GM10248 (cell line): ENCODE measurements at regions of chr1 and their contacts with region 1.

Region 1: GRCh38 chr1:227776331-227776771 is 39.1 kb upstream of the PRSS38 start:
- DNase-seq: no peak
- CTCF ChIP-seq: no peak

Region 2: GRCh38 chr1:227586733-227587132 is 189.6 kb before region 1 on chr1:
- CTCF ChIA-PET with region 1: no interaction called
- POLR2A ChIA-PET with region 1: no interaction called
- DNase-seq: no peak
- CTCF ChIP-seq: no peak

Region 3: DNA sequence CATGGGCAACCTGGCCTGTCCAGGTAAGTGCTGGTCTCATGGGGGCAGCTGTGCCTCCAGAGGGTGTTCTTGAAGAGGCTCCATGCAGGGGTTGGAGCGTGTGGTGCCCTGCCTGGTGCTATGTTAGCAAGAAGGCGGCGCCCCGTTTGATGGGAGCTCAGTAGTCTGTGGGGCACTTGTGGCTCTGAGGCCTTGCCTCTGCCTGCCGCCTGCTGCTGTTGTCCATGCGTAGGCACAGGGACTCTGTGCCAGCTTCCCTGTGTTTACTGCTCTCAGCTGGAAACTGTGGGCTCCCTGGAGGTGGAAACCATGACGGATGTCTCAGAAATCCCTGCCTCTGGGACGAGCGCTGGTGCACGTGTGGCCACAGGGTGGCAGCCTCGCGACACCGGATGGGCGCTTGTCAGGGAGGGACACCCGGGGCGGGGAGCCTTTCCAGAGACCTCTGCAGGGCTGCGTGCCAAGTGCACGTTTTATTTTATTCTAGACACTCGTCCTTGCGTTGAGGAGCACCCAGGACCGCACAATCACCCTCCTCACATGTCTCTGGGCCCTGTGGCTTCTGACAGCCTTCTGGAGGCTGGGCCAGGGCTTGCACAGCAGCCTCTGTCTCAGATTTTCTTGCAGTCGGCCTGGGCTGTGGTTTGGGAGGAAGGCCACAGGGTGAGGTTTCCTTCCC is 14.0 kb before region 1 on chr1:
- CTCF ChIA-PET with region 1: interaction called, 27 read pairs
- POLR2A ChIA-PET with region 1: no interaction called
- DNase-seq: peak; percentile 91
- CTCF ChIP-seq: peak; percentile 95